ENCODE measurements at regions of chr21 and their contacts with region 1.

Region 1: DNA sequence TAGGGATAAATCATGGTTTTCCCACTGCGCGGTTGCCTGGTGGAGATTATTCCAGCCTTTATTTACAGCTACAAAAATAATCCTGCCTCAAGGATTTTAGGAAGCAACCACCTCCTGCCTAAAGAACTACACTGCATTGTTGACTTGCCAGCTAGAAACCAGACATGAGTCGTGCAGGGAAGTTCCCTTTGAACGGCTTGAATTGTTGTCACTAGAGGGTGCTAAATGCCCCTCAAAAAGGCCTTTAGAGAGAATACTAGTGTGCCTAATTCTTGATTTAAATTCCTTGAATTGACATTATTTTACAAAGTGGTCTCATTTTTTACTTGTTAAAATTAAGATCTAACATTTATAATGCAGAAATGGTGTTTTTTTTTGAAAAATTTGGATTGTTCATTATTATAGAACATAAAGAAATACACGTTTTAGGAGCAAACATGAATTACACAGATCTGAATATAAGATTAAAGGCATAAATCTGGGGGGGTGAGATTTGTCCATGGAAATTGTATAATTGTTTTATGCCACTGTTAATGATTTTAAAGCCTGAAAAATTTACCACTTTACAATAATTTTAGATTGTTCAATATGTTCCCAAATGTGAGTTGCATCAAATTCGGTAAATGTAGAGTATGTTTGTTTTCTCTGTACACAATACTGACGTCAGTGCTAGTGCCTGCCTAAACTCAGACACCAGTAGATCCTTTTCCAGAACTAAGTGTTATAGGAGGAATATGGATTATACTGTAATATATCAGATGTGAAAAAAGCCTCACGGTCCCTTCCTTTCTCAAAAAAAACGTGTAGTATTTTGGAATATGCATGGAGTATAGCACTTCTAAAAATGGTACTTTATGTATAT is 7.6 kb upstream of the ERG start:
- DNase-seq: peak; percentile 59
- H3K4me3 Mint-ChIP-seq: no peak overlapping the region
- H3K27ac Mint-ChIP-seq: peak overlapping the region; percentile 60
- H3K4me1 Mint-ChIP-seq: peaks cover 29% of the 10 kb centered on the region
- H3K27me3 Mint-ChIP-seq: peaks cover 19% of the 10 kb centered on the region

Region 2: GRCh38 chr21:38494703-38495102 is 11.2 kb before region 1 on chr21:
- CTCF ChIA-PET with region 1: no interaction called
- POLR2A ChIA-PET with region 1: no interaction called
- DNase-seq: no peak
- H3K4me3 Mint-ChIP-seq: no peak overlapping the region
- H3K27ac Mint-ChIP-seq: no peak overlapping the region
- H3K4me1 Mint-ChIP-seq: peaks cover 2% of the 10 kb centered on the region
- H3K27me3 Mint-ChIP-seq: peaks cover 69% of the 10 kb centered on the region

Region 3: GRCh38 chr21:38520511-38520910 is 14.6 kb after region 1 on chr21:
- CTCF ChIA-PET with region 1: interaction called, 3 read pairs
- POLR2A ChIA-PET with region 1: interaction called, 12 read pairs
- DNase-seq: no peak
- H3K4me3 Mint-ChIP-seq: no peak overlapping the region
- H3K27ac Mint-ChIP-seq: no peak overlapping the region
- H3K4me1 Mint-ChIP-seq: peaks cover 12% of the 10 kb centered on the region
- H3K27me3 Mint-ChIP-seq: peaks cover 53% of the 10 kb centered on the region

Measured in activated CD4-positive, alpha-beta T cell treated with anti-CD3 and anti-CD28 coated beads, Interleukin-2, amount 10 ng/mL, durations not matched to agents 7 days and 5 days (primary cell).